Activated CD4-positive, alpha-beta T cell treated with anti-CD3 and anti-CD28 coated beads for 36 hours (primary cell): ENCODE measurements at regions of chr6 and their contacts with region 1.

Region 1: GRCh38 chr6:111361648-111362047 is 121.4 kb downstream of the REV3L start:
- DNase-seq: peak; percentile 10
- ATAC-seq: no peak
- H3K4me3 Mint-ChIP-seq: no peak overlapping the region
- H3K27ac Mint-ChIP-seq: no peak overlapping the region
- H3K4me1 Mint-ChIP-seq: no peaks in the 10 kb centered on the region
- H3K27me3 Mint-ChIP-seq: no peaks in the 10 kb centered on the region

Region 2: DNA sequence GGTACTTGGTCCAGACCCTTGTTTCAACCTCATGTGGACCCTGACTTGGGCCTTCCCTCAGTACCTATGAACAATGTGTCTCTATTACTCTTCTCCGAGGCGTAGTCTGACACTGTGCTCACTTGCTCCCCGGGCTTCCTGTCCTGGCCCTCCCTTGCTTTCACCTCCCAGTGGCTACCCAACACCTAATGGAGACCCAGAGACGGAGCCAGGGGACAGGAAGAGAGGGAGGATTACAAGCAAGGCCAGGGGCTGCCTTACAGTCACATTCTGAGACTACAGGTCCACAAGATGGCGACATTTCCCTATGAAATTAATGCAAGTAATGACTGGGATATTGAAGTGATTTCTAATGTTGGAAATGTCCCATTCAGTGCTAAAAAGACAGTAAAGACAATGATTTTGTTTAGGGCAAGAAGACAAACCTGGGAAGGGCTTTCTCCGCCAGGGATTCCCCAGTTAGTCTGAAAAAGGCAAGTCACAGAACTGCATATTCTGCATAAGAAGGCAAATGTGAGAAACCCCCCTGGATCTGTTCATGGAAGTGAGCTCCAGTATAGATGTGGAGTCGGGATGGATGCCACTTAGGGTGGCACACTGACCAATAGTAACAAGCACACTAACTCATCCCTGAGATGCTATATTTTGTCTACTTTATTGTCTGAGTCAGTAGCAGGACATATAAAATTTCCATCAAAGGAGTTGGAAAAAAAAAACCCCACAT is 1834.6 kb before region 1 on chr6:
- CTCF ChIA-PET with region 1: no interaction called
- POLR2A ChIA-PET with region 1: no interaction called
- intact Hi-C with region 1: no loop called
- DNase-seq: peak; percentile 66
- ATAC-seq: peak; percentile 84
- H3K4me3 Mint-ChIP-seq: no peak overlapping the region
- H3K27ac Mint-ChIP-seq: no peak overlapping the region
- H3K4me1 Mint-ChIP-seq: no peaks in the 10 kb centered on the region
- H3K27me3 Mint-ChIP-seq: no peaks in the 10 kb centered on the region

Region 3: GRCh38 chr6:111478749-111479148 is 117.1 kb after region 1 on chr6:
- CTCF ChIA-PET with region 1: no interaction called
- POLR2A ChIA-PET with region 1: no interaction called
- intact Hi-C with region 1: loop called in 1 of 2 experiments (anchors 5 kb)
- DNase-seq: no peak
- ATAC-seq: peak; percentile 8
- H3K4me3 Mint-ChIP-seq: no peak overlapping the region
- H3K27ac Mint-ChIP-seq: no peak overlapping the region
- H3K4me1 Mint-ChIP-seq: peaks cover 40% of the 10 kb centered on the region
- H3K27me3 Mint-ChIP-seq: no peaks in the 10 kb centered on the region